MCF 10A (cell line): ENCODE measurements at regions of chr4 and their contacts with region 1.

Region 1: GRCh38 chr4:105162123-105162796 is 15.6 kb downstream of the TET2 start:
- DNase-seq: no peak
- H3K4me3 Mint-ChIP-seq: no peak overlapping the region
- H3K27ac Mint-ChIP-seq: no peak overlapping the region
- H3K4me1 Mint-ChIP-seq: no peaks in the 10 kb centered on the region
- H3K27me3 Mint-ChIP-seq: no peaks in the 10 kb centered on the region
- CTCF ChIP-seq: no peak

Region 2: GRCh38 chr4:105179539-105180401 is 17.5 kb after region 1 on chr4:
- CTCF ChIA-PET with region 1: no interaction called
- POLR2A ChIA-PET with region 1: interaction called, 10 read pairs
- intact Hi-C with region 1: no loop called
- DNase-seq: no peak
- H3K4me3 Mint-ChIP-seq: no peak overlapping the region
- H3K27ac Mint-ChIP-seq: no peak overlapping the region
- H3K4me1 Mint-ChIP-seq: peaks cover 18% of the 10 kb centered on the region
- H3K27me3 Mint-ChIP-seq: no peaks in the 10 kb centered on the region
- CTCF ChIP-seq: no peak

Region 3: DNA sequence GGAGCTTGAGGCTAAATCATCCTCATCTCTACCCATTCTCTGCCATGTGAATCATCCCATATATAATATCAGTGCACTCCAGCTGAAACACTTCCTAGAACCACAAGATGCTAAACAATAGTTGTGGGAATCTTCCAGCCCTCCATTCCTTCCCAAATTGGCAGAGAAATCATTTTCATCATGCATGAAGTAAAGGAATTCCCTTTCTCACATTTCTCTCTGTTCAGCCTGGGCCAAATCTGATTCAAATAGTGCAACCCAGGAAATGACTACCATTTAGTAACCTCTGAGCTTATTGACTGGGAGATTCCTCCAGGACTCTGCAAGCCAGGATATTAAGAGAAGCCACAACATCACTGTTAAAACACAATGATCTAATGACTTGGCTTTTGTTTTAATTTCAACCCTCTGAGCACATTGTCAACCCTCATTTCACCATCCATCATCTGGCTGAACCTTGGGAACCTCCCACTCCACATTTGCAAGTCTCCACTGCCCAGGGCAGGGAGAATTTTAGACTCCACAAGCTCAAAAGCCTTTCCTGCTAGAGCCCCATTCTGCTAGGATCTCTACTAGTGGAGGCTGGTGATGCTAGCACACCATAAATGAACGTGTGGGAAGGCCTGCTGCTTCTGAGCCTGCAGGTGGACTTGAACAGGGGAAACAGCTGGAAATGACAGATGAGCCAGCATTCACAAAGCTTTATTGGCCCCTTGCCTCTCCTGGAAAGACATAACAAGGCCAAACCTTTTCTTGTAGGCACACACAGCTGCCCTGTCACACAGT is 118.3 kb after region 1 on chr4:
- CTCF ChIA-PET with region 1: no interaction called
- POLR2A ChIA-PET with region 1: no interaction called
- intact Hi-C with region 1: no loop called
- DNase-seq: peak; percentile 59
- H3K4me3 Mint-ChIP-seq: no peak overlapping the region
- H3K27ac Mint-ChIP-seq: no peak overlapping the region
- H3K4me1 Mint-ChIP-seq: no peaks in the 10 kb centered on the region
- H3K27me3 Mint-ChIP-seq: no peaks in the 10 kb centered on the region
- CTCF ChIP-seq: no peak

Region 4: DNA sequence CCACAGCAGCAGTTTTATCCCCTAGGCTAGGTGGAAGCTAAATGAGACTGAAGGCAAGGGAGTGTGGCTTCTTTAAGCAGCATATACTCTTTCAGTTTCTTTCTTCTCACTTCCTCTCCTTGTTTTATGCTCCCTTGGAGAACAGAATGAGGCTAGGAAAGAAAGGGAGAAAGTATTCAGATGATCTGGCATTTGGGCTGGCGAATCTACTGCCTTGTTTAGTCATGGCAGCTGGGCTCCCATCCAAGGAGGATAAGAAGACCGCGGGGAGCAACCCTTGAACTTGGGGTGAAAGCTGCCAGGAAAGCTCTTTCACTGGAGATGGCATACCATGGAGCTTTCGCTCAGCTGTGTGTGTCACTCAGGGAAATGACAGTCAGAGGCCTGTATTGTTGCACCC is 462.3 kb after region 1 on chr4:
- CTCF ChIA-PET with region 1: no interaction called
- POLR2A ChIA-PET with region 1: no interaction called
- intact Hi-C with region 1: no loop called
- DNase-seq: peak; percentile 66
- H3K4me3 Mint-ChIP-seq: no peak overlapping the region
- H3K27ac Mint-ChIP-seq: no peak overlapping the region
- H3K4me1 Mint-ChIP-seq: peaks cover 15% of the 10 kb centered on the region
- H3K27me3 Mint-ChIP-seq: no peaks in the 10 kb centered on the region
- CTCF ChIP-seq: no peak